PC-9 (cell line): ENCODE measurements at regions of chr11 and their contacts with region 1.

Region 1: DNA sequence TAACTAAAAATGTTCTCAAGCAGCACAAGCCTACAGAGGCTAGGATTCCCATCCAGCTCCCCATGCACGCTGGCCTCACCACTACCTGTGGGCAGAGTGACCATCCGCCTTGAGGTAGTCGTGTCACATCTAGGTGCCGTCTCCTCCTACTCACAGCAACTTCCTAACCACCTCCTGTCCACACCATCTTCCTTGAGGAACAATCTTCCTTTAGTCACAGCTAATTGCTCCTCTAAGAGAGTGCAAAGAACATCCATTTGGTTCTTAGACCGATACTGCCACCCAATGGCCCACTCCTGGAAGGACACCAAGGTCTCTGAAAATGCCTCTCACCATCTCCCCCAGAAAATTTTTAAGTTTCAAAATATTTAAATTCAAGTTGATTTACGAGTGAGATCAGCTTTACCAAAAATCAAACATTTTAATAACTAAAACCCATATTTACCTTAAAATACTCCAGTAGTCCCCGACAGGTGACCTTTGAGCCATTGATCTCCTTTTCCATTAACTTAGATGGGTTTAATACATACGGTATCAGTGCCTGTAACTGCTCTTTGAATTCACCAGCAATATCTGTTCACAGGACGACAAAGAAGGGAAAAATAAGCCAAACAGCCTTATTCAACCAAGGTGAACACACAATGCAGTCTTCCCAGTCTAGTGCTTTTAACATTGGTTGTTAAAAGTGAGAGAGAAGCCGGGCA is 21.7 kb upstream of the PLAAT3 start:
- DNase-seq: peak; percentile 51 to 66
- H3K4me3 ChIP-seq: no peak overlapping the region
- H3K27ac ChIP-seq: no peak overlapping the region
- H3K4me1 ChIP-seq: no peaks in the 10 kb centered on the region
- H3K27me3 ChIP-seq: no peaks in the 10 kb centered on the region
- CTCF ChIP-seq: peak; percentile 94

Region 2: GRCh38 chr11:63132985-63133775 is 502.7 kb before region 1 on chr11:
- CTCF ChIA-PET with region 1: interaction called, 3 read pairs
- POLR2A ChIA-PET with region 1: no interaction called
- intact Hi-C with region 1: loop called (anchors 10 kb)
- DNase-seq: no peak
- H3K4me3 ChIP-seq: no peak overlapping the region
- H3K27ac ChIP-seq: no peak overlapping the region
- H3K4me1 ChIP-seq: no peaks in the 10 kb centered on the region
- H3K27me3 ChIP-seq: peaks cover 23% of the 10 kb centered on the region; the same call in 1 of the 2 replicates
- CTCF ChIP-seq: no peak

Region 3: DNA sequence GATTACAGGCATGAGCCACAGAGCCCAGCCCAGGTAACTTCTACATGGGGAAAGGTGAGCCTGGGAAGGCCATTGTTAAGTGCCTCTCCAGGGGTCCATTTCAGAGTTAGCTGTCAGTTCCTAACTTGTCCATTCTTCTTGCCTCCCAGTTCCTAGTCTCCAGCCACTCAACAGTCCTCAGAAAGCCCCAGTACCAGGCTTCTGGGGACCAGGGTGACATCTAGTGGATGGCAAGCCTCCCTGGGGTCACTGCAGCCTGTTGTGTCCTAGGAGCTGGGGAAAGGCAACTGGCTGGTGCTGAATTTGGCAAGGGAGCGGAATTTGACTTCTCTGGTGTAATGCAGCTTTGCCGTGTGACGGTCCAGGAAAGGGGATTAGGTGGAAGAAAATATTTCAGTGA is 127.9 kb before region 1 on chr11:
- CTCF ChIA-PET with region 1: interaction called, 15 read pairs
- POLR2A ChIA-PET with region 1: no interaction called
- intact Hi-C with region 1: no loop called
- DNase-seq: peak; percentile 42 to 44
- H3K4me3 ChIP-seq: no peak overlapping the region
- H3K27ac ChIP-seq: no peak overlapping the region
- H3K4me1 ChIP-seq: no peaks in the 10 kb centered on the region
- H3K27me3 ChIP-seq: no peaks in the 10 kb centered on the region
- CTCF ChIP-seq: peak; percentile 52; the same call in 1 of the 2 replicates

Region 4: GRCh38 chr11:63592975-63593395 is 42.9 kb before region 1 on chr11:
- CTCF ChIA-PET with region 1: interaction called, 8 read pairs
- POLR2A ChIA-PET with region 1: no interaction called
- intact Hi-C with region 1: loop called (anchors 2 kb)
- DNase-seq: peak in 1 of 2 experiments; percentile 44
- H3K4me3 ChIP-seq: no peak overlapping the region
- H3K27ac ChIP-seq: no peak overlapping the region
- H3K4me1 ChIP-seq: no peaks in the 10 kb centered on the region
- H3K27me3 ChIP-seq: no peaks in the 10 kb centered on the region
- CTCF ChIP-seq: peak; percentile 84